ENCODE measurements at regions of chr2 and their contacts with region 1.

Region 1: GRCh38 chr2:75710577-75711253 is at the start of gene GCFC2:
- DNase-seq: peak; percentile 92
- H3K4me3 ChIP-seq: peak within 1 kb of the TSS; percentile 46 to 98 (median 92)
- H3K27ac ChIP-seq: peak within 1 kb of the TSS; percentile 81
- H3K4me1 ChIP-seq: peaks cover 28% of the 10 kb centered on the region
- H3K27me3 ChIP-seq: peaks cover 2 to 4% of the 10 kb centered on the region in 2 experiments
- CTCF ChIP-seq: peak in 1 of 2 donors; percentile 54
- POLR2A ChIP-seq: peak; percentile 81
- total RNA-seq, gene GCFC2: 18.3 and 20.0 TPM in 2 replicates

Region 2: DNA sequence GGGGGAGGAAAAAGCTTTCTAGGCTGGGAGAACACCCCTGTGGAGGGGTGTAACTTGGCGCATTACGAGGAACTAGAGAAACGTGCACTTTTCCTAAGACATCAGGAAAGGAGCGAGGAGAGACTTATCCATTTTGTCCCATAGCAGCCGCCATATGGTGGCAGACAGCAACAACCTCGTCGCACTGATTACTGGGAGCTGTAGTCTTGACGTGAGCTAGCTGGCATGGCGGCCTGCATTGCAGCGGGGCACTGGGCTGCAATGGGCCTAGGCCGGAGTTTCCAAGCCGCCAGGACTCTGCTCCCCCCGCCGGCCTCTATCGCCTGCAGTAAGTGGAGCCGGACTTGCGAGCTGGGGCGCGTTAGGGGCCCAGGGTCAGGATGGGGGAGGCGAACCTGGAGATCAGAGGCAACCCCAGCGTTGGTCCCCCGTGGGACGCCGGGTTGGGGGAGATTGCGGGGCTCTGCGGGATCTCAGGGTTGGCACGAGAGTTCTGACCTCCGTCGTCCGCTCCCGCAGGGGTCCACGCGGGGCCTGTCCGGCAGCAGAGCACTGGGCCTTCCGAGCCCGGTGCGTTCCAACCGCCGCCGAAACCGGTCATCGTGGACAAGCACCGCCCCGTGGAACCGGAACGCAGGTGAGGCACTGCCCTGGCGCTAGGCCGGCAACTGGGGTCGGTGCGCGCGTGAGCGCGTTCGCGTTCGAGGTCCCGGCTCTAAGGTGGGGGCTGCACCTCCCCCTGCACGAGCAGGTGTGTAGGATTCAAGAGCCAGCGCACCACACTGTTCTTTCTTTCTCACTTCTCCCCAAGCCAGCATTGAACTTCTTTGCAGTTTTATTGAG is 63.9 kb before region 1 on chr2 and contains the start of gene MRPL19:
- CTCF ChIA-PET with region 1: interaction called, 32 read pairs
- POLR2A ChIA-PET with region 1: interaction called, 4 read pairs
- dilution Hi-C with region 1: no loop called
- intact Hi-C with region 1: loop called (anchors 1 kb)
- DNase-seq: peak; percentile 93
- H3K4me3 ChIP-seq: peak within 1 kb of the TSS; percentile 65 to 78 (median 72)
- H3K27ac ChIP-seq: peak within 1 kb of the TSS; percentile 46
- H3K4me1 ChIP-seq: peaks cover 9% of the 10 kb centered on the region
- H3K27me3 ChIP-seq: no peaks in the 10 kb centered on the region
- CTCF ChIP-seq: no peak
- POLR2A ChIP-seq: peak; percentile 68
- total RNA-seq, gene MRPL19: 50.4 and 52.3 TPM in 2 replicates

Region 3: GRCh38 chr2:75772908-75773630 is 62.4 kb after region 1 on chr2:
- CTCF ChIA-PET with region 1: no interaction called
- POLR2A ChIA-PET with region 1: no interaction called
- dilution Hi-C with region 1: no loop called
- intact Hi-C with region 1: no loop called
- DNase-seq: no peak
- H3K4me3 ChIP-seq: no peak overlapping the region
- H3K27ac ChIP-seq: no peak overlapping the region
- H3K4me1 ChIP-seq: no peaks in the 10 kb centered on the region
- H3K27me3 ChIP-seq: no peaks in the 10 kb centered on the region
- CTCF ChIP-seq: no peak
- POLR2A ChIP-seq: no peak